AG04450 (cell line): ENCODE measurements at regions of chr12 and their contacts with region 1.

Region 1: DNA sequence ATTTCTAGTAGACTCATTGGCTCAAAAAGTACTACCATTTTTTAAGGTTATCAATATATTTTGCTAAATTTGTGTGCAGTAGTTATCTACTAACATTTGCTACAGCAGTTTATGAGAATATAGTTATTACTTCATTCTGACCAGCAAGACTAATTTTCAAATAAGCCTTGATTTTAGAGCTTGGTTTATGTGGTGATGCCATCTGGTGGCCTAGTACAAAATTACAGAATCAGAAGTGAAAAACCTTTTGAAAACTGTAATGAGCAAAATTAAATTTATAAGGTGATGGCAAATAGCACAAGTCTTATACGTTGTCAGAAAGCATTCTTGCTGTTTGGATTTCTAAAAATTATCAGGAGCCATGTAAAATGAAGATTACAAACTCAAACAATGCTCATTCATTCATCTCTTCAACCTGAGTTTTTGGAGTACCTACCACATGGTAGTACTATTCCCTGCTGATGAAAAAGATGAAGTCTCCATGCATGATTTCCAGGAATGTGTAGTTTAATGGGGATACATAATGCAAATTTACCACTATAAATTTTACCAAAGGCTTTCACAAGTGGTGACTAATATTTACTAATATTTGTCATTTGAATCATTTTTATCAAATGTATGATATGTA is 51.0 kb downstream of the MAGOHB start:
- DNase-seq: no peak
- H3K4me3 ChIP-seq: no peak overlapping the region
- H3K27ac ChIP-seq: no peak overlapping the region
- H3K27me3 ChIP-seq: no peaks in the 10 kb centered on the region
- CTCF ChIP-seq: peak; percentile 62

Region 2: DNA sequence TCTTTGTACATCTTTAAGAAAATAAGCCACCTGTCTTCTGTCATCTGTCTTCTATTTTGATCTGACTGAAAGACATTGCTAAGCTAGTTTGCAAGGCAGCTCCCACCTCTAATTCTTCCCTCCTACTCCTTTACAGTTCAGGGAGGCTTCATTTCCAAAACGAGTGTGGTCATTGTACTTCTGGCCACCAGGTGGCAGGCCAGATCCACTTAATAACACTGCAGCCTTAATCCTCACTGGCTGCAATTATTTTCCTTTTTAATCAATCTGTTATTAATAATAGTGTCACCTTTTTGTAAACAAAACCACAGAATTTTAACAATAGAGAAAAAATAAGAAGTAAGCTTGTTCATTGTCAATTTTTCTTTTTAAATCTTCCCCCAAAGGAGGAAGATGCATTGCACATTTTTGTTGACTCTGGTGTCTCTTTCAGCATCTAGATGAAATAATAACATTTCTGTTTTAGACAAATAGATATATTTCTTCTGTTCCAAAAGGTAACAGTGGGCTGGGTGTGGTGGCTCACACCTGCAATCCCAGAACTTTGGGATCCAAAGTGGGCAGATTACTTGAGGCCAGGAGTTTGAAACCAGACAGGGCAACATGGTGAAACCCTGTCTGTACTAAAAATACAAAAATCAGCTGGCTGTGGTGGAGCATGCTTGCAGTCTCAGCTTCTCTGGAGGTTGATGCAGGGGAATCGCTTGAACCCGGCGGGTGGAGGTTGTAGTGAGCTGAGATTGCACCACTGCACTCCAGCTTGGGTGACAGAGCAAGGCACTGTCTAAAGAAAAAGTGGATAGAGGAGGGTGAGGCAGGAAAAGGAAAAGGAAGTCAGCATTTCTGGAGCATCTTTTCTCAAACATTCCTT is 326.4 kb before region 1 on chr12:
- CTCF ChIA-PET with region 1: interaction called, 64 read pairs
- POLR2A ChIA-PET with region 1: no interaction called
- DNase-seq: no peak
- H3K4me3 ChIP-seq: no peak overlapping the region
- H3K27ac ChIP-seq: no peak overlapping the region
- H3K27me3 ChIP-seq: no peaks in the 10 kb centered on the region
- CTCF ChIP-seq: peak; percentile 83

Region 3: GRCh38 chr12:10331642-10332239 is 230.7 kb before region 1 on chr12:
- CTCF ChIA-PET with region 1: interaction called, 55 read pairs
- POLR2A ChIA-PET with region 1: no interaction called
- DNase-seq: peak; percentile 16
- H3K4me3 ChIP-seq: no peak overlapping the region
- H3K27ac ChIP-seq: no peak overlapping the region
- H3K27me3 ChIP-seq: no peaks in the 10 kb centered on the region
- CTCF ChIP-seq: peak; percentile 89

Region 4: DNA sequence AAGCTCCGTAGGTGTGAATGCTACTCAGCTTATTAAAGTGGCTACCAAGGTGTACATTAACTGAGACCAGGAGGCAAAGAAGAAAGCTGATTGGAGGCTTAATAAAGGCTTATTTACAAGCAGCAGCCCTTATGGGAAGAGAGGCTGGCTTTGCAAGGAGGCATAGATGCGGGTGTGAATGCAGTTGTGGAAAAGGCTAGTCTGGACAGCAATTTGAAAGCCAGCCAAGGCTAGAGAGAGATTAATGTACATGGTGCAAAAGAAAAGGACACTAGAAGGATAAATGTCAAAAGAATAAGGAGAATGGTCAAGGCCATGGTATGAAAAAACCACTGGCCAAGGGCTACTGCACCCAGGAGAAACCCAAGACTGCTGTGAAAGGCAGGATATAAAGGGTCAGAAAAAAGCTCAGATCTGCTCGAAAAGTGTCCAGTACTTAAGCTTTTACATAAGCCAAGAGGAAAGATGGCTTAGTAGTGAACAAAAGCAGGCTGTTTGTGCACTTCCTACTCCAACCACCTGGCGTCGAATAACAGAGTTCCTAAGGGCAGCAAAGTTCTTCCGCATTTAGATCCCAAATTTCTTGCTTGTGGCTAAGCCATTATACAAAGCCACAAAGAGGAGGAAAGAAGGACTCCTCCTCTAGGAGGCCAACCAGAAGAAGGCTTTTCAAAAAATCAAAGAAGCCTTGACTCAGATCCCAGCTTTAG is 196.6 kb before region 1 on chr12:
- CTCF ChIA-PET with region 1: interaction called, 11 read pairs
- POLR2A ChIA-PET with region 1: no interaction called
- DNase-seq: no peak
- H3K4me3 ChIP-seq: peak overlapping the region; percentile 72
- H3K27ac ChIP-seq: peak overlapping the region; percentile 80
- H3K27me3 ChIP-seq: no peaks in the 10 kb centered on the region
- CTCF ChIP-seq: peak; percentile 24

Region 5: GRCh38 chr12:11855983-11856374 is 1293.6 kb after region 1 on chr12:
- CTCF ChIA-PET with region 1: no interaction called
- POLR2A ChIA-PET with region 1: no interaction called
- DNase-seq: no peak
- H3K4me3 ChIP-seq: no peak overlapping the region
- H3K27ac ChIP-seq: no peak overlapping the region
- H3K27me3 ChIP-seq: no peaks in the 10 kb centered on the region
- CTCF ChIP-seq: no peak